Vagina (tissue), 2 donors: ENCODE measurements at regions of chr5 and their contacts with region 1.

Region 1: DNA sequence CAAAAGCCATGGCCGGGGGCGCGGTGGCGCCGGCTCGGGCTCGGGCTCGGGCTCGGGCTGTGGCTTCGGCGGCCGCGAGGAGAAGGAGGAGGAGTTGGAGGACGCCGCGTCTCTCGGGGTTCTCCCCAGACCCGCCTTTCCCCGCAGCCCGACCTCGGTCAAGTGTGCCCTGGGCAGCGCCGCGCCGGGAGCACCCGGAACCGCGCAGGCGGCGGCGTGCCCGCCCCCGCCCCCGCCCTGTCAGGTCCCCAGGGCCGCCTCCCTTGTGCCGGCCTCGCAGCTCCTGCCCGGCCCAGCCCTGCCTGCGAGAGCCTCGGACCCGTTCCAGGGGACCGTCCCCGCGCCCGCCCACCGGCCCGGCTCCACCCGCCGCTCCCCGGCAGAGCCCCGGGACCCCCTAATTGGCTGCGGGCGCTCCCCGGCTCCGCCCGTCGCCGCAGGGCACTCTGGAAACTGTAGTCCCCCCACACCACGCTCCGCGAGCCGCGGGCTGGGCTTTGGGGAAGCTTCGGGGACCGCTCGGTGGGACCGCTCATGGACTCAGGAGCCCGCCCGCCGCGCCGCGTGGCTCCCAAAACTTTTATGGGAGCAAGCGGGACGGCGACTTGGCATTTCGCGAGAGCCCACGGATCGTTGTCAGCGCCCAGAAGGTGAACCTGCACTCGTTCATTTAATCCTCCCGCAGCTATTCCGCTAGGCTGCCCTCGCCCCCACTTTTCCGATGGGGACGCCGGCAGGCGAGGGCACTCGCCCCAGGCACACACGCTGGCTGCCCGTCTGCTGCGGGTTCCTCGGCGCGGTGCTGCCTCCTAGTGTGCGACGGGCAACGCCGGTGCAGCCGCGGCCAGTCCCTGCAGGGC is at the start of gene STK10:
- DNase-seq: no peak
- H3K4me3 ChIP-seq: peak within 1 kb of the TSS; percentile 75 to 96
- H3K27ac ChIP-seq: peak within 1 kb of the TSS; percentile 89
- H3K4me1 ChIP-seq: peaks cover 24% of the 10 kb centered on the region
- H3K27me3 ChIP-seq: no peaks in the 10 kb centered on the region
- CTCF ChIP-seq: peak; percentile 62 to 93 (median 87)
- POLR2A ChIP-seq: peak in 1 of 2 donors; percentile 25
- total RNA-seq, gene STK10: 33.9 TPM

Region 2: GRCh38 chr5:171405601-171406005 is 782.7 kb before region 1 on chr5:
- intact Hi-C with region 1: loop called (anchors 5 kb)
- DNase-seq: no peak
- H3K4me3 ChIP-seq: no peak overlapping the region
- H3K27ac ChIP-seq: no peak overlapping the region
- H3K4me1 ChIP-seq: peaks cover 5% of the 10 kb centered on the region
- H3K27me3 ChIP-seq: no peaks in the 10 kb centered on the region
- CTCF ChIP-seq: peak in 1 of 3 experiments; percentile 8
- POLR2A ChIP-seq: no peak

Region 3: DNA sequence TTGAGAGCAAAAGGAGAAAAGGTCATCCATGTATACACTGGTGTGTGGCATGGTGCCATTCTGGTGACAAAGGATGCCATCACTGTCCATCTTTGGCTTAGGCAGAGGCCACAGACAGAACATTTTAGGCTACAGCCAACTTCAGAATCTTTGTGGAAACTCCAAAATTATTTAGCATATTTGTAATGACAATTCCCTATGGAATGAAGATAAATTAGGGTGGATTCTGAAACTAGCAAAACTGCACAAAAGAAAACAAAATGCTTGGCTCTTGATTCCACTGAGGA is 274.3 kb before region 1 on chr5:
- intact Hi-C with region 1: loop called (anchors 10 kb)
- DNase-seq: no peak
- H3K4me3 ChIP-seq: no peak overlapping the region
- H3K27ac ChIP-seq: no peak overlapping the region
- H3K4me1 ChIP-seq: peaks cover 24% of the 10 kb centered on the region
- H3K27me3 ChIP-seq: no peaks in the 10 kb centered on the region
- CTCF ChIP-seq: no peak
- POLR2A ChIP-seq: no peak

Region 4: DNA sequence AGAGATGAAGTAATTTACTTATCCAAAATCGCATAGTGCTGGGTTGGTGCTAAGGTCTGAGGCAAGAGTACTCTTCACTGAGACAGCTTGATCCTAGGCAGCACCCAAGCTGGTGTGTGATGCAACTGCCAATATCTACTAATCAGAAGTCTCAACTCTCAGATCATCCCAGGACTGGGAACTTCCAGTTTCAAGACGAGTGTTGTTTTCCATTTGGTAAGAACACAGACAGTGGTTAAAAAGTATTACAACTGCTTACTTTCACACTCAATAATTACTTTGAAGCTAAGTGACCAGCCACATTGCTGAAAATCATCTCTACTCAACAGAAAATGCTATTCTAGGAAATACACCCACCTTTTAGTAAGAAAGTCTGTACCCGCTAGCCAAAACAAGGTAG is 227.1 kb before region 1 on chr5:
- intact Hi-C with region 1: no loop called
- DNase-seq: no peak
- H3K4me3 ChIP-seq: no peak overlapping the region
- H3K27ac ChIP-seq: no peak overlapping the region
- H3K4me1 ChIP-seq: peaks cover 71% of the 10 kb centered on the region
- H3K27me3 ChIP-seq: no peaks in the 10 kb centered on the region
- CTCF ChIP-seq: no peak
- POLR2A ChIP-seq: no peak

Region 5: DNA sequence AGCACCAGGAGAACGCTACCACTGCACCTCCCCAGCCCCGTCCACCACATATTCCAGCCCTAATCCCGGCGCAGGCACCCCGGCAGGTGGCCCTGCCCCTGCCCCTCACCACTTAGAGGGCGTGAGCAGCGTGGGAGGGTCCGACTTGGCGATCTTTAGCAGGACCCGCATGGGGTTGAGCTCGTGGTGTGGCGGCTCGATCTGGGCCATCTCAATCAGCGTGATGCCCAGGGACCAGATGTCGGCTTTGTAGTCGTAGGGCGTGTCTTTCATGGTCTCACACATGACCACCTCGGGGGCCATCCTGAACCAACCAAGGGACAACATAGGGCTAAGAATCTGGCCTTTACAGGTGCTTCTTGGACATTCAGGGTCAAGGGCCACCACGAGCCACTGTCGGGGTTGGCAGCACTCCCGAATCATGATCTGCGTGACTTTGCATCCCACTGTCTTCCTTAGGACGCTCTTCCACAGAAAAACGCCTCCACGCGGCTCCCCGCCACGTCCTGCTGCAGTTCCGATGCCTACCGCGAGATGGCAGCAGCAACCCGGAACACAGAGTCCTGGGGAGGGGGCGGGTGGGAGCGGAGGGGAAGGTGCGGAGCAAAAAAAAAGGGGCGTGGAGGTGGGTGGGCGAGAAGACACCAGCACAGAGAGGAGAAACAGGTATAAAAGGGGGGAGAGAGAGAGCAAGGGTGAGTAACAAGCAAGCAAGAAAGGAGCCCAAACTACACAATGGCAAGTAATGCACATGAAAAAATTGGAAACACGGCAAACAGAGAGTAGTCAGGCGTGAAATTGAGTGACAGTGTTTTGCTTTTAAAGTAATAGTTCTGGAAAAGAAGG is 81.5 kb before region 1 on chr5:
- intact Hi-C with region 1: loop called (anchors 2 kb)
- DNase-seq: no peak
- H3K4me3 ChIP-seq: peak overlapping the region; percentile 26 to 32
- H3K27ac ChIP-seq: peak overlapping the region; percentile 4
- H3K4me1 ChIP-seq: peaks cover 49% of the 10 kb centered on the region
- H3K27me3 ChIP-seq: no peaks in the 10 kb centered on the region
- CTCF ChIP-seq: peak; percentile 81 to 98 (median 84)
- POLR2A ChIP-seq: no peak

Region 6: GRCh38 chr5:172283020-172283861 is 95.0 kb after region 1 on chr5 and contains the start of gene UBTD2:
- intact Hi-C with region 1: loop called (anchors 10 kb)
- DNase-seq: peak in 1 of 2 donors; percentile 88
- H3K4me3 ChIP-seq: peak within 1 kb of the TSS; percentile 77 to 96
- H3K27ac ChIP-seq: peak within 1 kb of the TSS; percentile 95
- H3K4me1 ChIP-seq: peaks cover 20% of the 10 kb centered on the region
- H3K27me3 ChIP-seq: no peaks in the 10 kb centered on the region
- CTCF ChIP-seq: peak in 1 of 3 experiments; percentile 72
- POLR2A ChIP-seq: no peak
- total RNA-seq, gene UBTD2: 22.8 TPM